ENCODE measurements at regions of chr9 and their contacts with region 1.

Region 1: DNA sequence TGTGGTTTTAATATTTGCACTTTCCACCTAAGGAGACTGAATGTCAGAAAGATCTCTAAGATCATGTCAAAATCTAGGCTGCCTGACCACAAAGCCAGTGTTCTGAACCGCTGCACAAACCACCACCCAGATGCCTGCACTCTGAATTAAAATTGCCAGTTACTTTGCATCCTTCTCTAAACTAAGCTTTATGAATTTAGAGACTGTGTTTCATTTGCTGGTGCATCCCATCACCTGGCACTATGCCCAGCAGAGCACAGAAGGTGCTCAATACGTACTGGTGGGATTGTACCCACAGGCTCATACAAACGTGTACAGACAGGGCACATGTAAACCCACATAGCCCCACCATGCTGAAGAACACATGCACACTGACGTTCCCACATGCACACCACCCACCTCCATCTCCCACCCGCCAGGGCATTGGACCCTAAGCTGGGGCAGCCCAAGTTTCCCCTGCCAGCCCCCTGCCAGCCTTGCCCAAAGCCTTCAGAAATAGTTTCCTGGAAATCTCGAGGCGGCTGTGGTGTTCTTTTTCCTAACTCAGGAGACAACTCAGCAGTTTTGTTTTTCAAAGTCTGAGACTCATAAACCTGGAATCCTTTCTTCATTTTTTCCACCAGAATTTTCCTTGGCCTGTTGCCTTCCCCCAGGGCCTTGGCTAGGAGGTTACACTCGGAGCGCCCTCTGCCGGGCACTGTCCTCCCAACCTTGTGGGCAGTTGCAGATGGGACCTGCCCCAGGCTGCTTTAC is 9.6 kb upstream of the TRAF1 start:
- DNase-seq: peak; percentile 77
- CTCF ChIP-seq: peak; percentile 97

Region 2: DNA sequence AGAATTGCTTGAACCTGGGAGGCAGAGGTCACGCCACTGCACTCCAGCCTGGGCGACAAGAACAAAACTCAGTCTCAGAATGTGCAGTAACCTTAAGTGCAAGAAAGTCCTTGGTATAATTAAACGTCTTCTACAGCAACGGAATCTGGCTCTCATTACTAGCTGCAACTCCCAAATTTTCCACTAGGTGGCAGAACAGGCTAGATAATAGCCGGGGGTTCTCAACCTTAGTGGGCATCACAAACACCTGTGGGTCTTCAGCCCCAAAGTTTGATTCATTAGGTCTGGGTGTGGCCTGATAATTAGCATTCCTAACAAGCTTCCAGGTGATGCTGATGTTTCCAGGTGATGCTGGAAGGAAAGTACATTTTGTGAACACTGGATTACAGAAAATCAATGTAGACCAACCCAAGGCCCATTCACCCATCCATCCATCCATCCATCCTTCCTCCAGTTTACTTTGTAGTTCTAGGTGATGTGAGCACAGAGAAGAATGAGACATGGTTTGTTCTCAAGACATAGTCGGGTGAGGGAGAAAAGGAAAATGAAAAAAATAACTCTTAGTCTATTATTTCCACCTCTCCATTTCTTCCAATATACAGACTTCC is 180.3 kb before region 1 on chr9:
- CTCF ChIA-PET with region 1: interaction called, 19 read pairs
- POLR2A ChIA-PET with region 1: no interaction called
- DNase-seq: peak; percentile 70
- CTCF ChIP-seq: peak; percentile 79

Region 3: GRCh38 chr9:120868676-120869359 is 67.4 kb before region 1 on chr9:
- CTCF ChIA-PET with region 1: interaction called, 22 read pairs
- POLR2A ChIA-PET with region 1: no interaction called
- DNase-seq: peak; percentile 99
- CTCF ChIP-seq: peak; percentile 69

Region 4: DNA sequence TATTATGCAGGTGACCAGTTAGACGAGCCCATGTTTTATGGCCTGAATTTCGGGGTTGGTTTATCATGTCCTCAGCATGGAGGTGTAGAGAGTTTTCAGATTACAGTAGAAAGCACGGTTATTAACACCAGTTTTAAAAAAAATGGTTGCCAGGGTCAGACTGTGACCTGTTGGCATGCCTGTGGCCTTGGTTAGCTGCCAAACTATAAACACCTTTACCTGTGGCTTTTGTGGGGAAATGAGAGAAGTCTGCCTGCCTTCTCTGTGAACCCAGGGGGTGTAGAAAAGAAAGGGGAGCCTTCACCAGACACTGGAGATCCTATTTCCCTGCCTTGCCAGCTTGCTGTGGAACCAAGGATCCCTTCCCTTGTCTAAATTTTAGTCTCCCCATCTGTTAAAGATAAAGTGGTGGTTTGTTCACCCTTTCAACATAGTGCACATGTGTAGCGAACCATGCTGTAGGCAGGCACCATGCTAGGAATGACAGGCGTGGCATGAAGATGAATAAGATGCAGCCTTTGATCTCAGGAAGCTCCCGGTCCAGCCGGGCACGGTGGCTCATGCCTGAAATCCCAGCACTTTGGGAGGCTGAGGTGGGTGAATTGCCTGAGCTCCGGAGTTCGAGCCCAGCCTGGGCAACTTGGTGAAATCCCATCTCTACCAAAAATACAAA is 53.1 kb before region 1 on chr9:
- CTCF ChIA-PET with region 1: no interaction called
- POLR2A ChIA-PET with region 1: no interaction called
- DNase-seq: no peak
- CTCF ChIP-seq: no peak

Region 5: GRCh38 chr9:120925535-120926396 is 10.4 kb before region 1 on chr9:
- CTCF ChIA-PET with region 1: interaction called, 13 read pairs
- POLR2A ChIA-PET with region 1: no interaction called
- DNase-seq: peak; percentile 72
- CTCF ChIP-seq: no peak

Region 6: DNA sequence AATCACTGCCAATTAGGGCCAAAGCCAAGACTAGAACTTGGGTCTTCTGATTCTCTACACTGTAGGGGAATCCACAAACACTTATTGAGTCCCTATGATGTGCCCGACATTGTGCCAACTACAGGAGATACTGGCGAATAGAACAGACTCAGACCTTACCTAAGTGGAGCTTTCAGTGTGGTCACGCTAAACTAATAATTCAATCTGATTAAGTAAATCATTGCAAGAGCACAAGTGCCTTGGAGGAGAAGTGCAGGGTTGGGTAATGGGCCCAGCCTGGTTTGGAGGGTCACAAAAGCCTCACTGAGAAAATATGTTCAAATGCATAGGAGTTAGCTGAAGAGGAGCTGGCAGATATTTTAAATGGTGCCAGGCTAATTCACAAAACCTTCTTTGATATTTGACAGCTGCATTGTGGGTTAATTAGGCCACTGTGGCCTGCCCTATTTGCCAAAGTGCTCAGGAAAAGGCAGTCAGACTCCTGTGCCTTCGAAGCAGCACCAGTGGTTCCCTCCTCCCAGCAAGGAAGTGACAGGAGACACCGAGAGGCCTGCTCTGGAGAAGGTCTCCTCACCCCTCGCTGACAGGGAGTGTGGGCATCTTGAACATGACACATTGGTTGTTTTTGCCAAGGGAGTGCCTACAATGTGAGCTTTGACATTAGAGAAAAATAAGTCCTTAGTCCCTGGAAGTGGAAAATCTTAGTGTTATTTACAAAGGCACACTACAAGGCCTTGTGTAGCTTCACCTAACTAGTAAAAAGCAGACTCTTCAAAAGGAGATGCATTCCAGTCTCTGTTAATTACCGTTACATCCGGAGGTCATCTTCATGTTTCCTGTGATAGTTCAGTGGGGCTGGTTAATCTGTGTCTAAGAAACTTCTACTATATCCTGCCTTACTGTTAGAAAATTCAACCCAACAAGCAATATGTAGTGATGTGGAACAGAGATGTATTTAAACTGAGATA is 14.5 kb after region 1 on chr9:
- CTCF ChIA-PET with region 1: interaction called, 10 read pairs
- POLR2A ChIA-PET with region 1: no interaction called
- DNase-seq: no peak
- CTCF ChIP-seq: no peak

Region 7: GRCh38 chr9:122904466-122904822 is 1968.3 kb after region 1 on chr9:
- CTCF ChIA-PET with region 1: no interaction called
- POLR2A ChIA-PET with region 1: no interaction called
- DNase-seq: peak; percentile 29
- CTCF ChIP-seq: no peak